ENCODE measurements at regions of chr12 and their contacts with region 1.

Region 1: DNA sequence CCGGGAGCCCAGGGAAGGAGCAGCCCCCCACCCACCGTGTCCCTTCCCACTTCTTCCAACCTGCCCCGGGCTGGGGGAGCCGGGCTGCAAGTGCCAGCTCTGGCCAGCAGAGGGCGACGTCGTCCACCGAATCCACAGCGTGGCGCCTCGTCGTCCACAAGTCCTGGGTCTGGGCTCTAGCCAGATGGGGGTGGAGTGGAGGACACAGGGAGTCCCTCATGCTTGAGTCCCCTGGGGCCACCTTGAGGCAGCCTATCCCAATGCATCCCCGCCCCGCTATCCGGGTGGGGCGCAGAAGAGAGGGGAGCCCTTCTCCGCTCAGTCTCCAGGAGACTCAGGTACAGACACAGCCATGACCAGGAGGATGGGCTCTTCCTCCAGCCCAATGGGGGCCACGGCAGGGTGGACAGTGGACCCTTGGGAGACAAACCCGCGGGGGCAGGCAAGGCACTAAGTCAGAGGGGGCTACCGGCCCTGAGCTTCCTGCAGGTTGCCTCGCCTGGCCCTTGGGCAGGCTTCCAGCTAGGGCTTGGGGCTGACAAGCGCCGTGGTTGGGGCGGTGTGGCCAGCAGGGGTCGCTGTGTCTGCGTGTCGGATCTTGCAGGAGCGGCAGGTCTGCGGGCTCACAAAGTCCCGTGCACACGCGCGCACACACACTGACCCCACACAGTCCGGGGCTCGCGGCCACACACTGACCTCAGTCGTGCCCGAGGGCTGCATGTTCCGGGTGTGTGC is 5.5 kb downstream of the AQP5 start:
- DNase-seq: peak; percentile 90 to 94
- ATAC-seq: peak; percentile 87 to 90 (median 90)
- H3K4me3 ChIP-seq: peak overlapping the region; percentile 26
- H3K4me3 Mint-ChIP-seq: peak overlapping the region; percentile 83
- H3K27ac ChIP-seq: no peak overlapping the region
- H3K27ac Mint-ChIP-seq: peak overlapping the region in 1 of 2 donors; percentile 42
- H3K4me1 ChIP-seq: peaks cover 14% of the 10 kb centered on the region
- H3K4me1 Mint-ChIP-seq: peaks cover 0 to 5% of the 10 kb centered on the region in 2 donors
- H3K27me3 ChIP-seq: peaks cover 8% of the 10 kb centered on the region
- H3K27me3 Mint-ChIP-seq: peaks cover 32 to 34% of the 10 kb centered on the region in 2 donors
- CTCF ChIP-seq: peak; percentile 93

Region 2: GRCh38 chr12:49161092-49161795 is 806.0 kb before region 1 on chr12:
- intact Hi-C with region 1: no loop called
- DNase-seq: no peak
- ATAC-seq: no peak
- H3K4me3 ChIP-seq: no peak overlapping the region
- H3K4me3 Mint-ChIP-seq: no peak overlapping the region
- H3K27ac ChIP-seq: peak overlapping the region; percentile 19
- H3K27ac Mint-ChIP-seq: no peak overlapping the region
- H3K4me1 ChIP-seq: peaks cover 8% of the 10 kb centered on the region
- H3K4me1 Mint-ChIP-seq: no peaks in the 10 kb centered on the region
- H3K27me3 ChIP-seq: no peaks in the 10 kb centered on the region
- H3K27me3 Mint-ChIP-seq: no peaks in the 10 kb centered on the region
- CTCF ChIP-seq: no peak

Region 3: GRCh38 chr12:49651855-49652254 is 315.4 kb before region 1 on chr12:
- intact Hi-C with region 1: no loop called
- DNase-seq: no peak
- ATAC-seq: no peak
- H3K4me3 ChIP-seq: no peak overlapping the region
- H3K4me3 Mint-ChIP-seq: no peak overlapping the region
- H3K27ac ChIP-seq: no peak overlapping the region
- H3K27ac Mint-ChIP-seq: peak overlapping the region in 1 of 2 donors; percentile 6
- H3K4me1 ChIP-seq: no peaks in the 10 kb centered on the region
- H3K4me1 Mint-ChIP-seq: peaks cover 20 to 30% of the 10 kb centered on the region in 2 donors
- H3K27me3 ChIP-seq: no peaks in the 10 kb centered on the region
- H3K27me3 Mint-ChIP-seq: no peaks in the 10 kb centered on the region
- CTCF ChIP-seq: no peak

Region 4: GRCh38 chr12:50074936-50075807 is 108.0 kb after region 1 on chr12:
- intact Hi-C with region 1: loop called (anchors 5 kb)
- DNase-seq: peak; percentile 77 to 89
- ATAC-seq: peak; percentile 88 to 99 (median 96)
- H3K4me3 ChIP-seq: no peak overlapping the region
- H3K4me3 Mint-ChIP-seq: no peak overlapping the region
- H3K27ac ChIP-seq: no peak overlapping the region
- H3K27ac Mint-ChIP-seq: peak overlapping the region in 1 of 2 donors; percentile 52
- H3K4me1 ChIP-seq: peaks cover 9% of the 10 kb centered on the region
- H3K4me1 Mint-ChIP-seq: peaks cover 0 to 9% of the 10 kb centered on the region in 2 donors
- H3K27me3 ChIP-seq: no peaks in the 10 kb centered on the region
- H3K27me3 Mint-ChIP-seq: peaks cover 0 to 8% of the 10 kb centered on the region in 2 donors
- CTCF ChIP-seq: peak; percentile 92

Measured in natural killer cell (primary cell).